AG04449 (cell line): ENCODE measurements at regions of chr1 and their contacts with region 1.

Region 1: GRCh38 chr1:180252638-180253536 is 22.8 kb downstream of the LHX4 start:
- DNase-seq: no peak
- H3K4me3 ChIP-seq: no peak overlapping the region
- CTCF ChIP-seq: peak; percentile 82

Region 2: GRCh38 chr1:180231506-180231921 is 21.4 kb before region 1 on chr1:
- CTCF ChIA-PET with region 1: interaction called, 19 read pairs
- POLR2A ChIA-PET with region 1: no interaction called
- DNase-seq: no peak
- H3K4me3 ChIP-seq: peak overlapping the region; percentile 52
- CTCF ChIP-seq: no peak

Region 3: DNA sequence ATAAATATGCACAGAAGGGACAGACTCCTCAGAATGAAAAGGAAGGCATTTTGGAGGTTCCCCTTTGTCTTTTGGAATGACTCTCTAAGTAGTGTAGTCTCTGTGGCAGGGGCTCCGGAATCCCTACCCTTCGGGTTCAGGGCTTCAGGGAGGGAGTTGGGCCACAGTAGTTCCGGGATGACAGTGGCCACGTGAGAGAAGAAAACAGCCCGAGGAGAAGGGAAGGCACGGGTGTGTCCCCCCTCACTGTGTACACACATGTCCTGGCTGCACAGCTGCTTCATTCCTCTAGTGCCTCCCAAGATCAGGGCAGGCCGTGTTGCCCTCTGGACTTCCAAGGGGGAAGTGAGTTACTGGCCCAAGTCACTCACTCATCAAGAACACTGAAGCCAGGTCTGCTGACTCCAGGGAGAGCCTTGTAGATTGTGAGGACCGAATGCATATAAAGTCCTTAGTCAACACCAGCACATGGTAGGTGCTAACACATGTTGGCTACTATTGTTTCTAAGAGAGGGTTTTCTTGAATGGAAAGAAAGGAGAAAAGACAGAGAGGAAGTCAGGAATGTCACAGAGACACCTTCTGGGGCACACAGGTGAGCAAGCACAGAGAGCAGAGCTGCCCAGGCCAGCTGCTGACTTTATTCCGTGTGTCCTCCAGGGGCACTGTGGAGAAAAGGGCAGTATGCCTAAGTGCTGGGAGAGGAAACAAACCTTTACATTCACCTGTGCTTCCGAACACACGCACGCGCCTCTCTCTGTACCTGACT is 17.1 kb after region 1 on chr1:
- CTCF ChIA-PET with region 1: interaction called, 41 read pairs
- POLR2A ChIA-PET with region 1: no interaction called
- DNase-seq: no peak
- H3K4me3 ChIP-seq: no peak overlapping the region
- CTCF ChIP-seq: peak; percentile 53

Region 4: DNA sequence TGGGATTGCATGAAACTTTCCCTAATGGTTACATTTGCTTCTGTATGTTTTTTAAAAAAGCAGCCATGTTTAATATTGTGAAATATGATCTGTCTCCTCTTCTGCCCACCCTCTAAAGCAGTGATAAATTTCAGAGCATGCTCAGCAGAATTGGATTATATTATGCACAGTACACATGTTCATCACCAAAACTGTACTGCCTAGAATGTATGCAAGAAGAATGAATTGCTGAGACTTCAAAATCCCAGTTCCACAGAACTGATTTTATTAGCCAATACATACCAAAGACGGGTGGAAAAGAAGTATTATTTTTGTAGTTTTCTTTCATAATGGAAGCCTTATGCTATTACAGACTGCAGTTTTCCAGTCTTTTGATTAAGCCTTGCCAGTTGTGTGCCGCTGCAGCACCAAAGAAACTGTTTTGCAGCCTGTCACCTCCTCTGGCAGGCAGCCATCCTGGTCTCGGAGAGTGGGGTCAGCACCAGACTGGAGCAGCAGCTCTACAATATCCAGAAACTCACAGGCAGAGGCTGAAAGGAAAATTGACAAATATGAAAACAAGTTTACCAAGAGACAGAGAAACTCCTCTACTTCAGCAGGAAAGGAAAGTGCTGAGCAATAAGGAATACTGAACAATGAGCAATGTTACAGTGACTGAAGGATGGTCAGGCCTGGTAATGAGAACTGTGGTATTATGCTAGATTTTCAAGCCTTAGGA is 35.3 kb after region 1 on chr1:
- CTCF ChIA-PET with region 1: interaction called, 15 read pairs
- POLR2A ChIA-PET with region 1: no interaction called
- DNase-seq: no peak
- H3K4me3 ChIP-seq: no peak overlapping the region
- CTCF ChIP-seq: no peak

Region 5: DNA sequence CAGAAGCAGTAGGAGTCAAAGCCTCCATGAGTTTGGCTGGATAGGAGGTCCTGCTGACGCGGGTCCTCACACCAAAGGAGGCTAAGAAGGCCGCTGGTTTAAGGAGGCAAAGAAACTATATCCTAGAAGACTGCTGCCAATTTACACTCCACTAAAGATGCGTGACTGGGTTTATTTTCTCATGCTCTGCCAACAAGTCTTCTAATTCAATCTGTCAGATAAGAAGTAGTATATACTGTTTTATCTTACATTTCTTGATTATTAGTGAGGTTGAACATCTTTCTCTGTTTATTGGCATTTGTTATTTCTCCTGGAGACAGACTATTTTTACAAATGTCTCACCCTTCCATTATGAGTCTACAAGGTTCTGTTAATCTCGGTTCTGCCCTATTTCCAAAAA is 215.4 kb after region 1 on chr1:
- CTCF ChIA-PET with region 1: interaction called, 89 read pairs
- POLR2A ChIA-PET with region 1: no interaction called
- DNase-seq: no peak
- H3K4me3 ChIP-seq: no peak overlapping the region
- CTCF ChIP-seq: no peak

Region 6: DNA sequence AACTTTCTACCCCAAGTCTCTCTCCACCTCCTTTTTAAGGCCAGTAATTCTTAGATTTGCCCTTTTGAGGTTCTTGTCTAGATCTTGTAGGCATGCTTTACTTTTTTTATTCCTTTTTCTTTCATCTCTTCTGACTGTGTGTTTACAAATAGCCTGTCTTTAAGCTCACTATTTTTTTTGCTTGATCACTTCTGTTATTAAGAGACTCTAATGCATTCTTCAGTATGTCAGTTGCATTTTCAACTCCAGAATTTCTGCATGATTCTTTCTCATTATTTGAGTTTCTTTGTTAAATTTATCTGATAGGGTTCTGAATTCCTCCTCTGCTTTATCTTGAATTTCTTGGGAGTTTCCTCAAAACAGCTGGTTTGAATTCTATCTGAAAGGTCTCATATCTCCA is 409.8 kb after region 1 on chr1:
- CTCF ChIA-PET with region 1: no interaction called
- POLR2A ChIA-PET with region 1: no interaction called
- DNase-seq: no peak
- H3K4me3 ChIP-seq: no peak overlapping the region
- CTCF ChIP-seq: no peak

Region 7: DNA sequence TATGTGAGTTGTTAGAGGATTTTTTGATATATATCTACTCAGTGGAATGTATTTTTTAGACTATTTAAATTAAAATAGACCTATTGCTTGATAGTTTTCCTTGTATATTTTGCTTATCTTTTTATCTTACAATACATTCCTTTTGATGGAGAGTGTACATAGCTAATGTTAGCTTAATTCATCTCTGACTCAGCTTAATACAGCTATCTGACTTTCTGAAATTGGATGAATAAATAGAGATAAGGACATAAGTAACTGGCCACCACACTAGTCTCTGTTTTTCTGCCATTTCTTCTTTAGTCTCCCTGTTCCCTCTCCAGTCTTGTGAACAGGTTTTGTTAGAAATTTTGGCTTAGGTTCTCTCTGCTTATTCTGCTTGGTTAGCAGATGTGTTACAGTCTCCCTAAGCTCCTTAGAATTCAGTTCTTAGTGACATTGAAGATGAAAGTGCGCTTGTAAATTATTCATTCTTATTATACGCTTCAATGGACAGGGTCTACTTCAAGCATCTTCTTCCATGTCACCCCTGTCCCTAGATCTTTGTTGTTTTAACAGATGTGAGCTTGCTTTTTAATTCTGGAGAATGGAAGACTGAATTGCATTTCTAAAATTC is 438.5 kb after region 1 on chr1:
- CTCF ChIA-PET with region 1: no interaction called
- POLR2A ChIA-PET with region 1: no interaction called
- DNase-seq: no peak
- H3K4me3 ChIP-seq: no peak overlapping the region
- CTCF ChIP-seq: no peak